ENCODE measurements at regions of chr1 and their contacts with region 1.

Region 1: GRCh38 chr1:149927503-149928387 is at the start of gene SF3B4:
- DNase-seq: peak; percentile 90 to 97 (median 95)
- ATAC-seq: peak; percentile 95 to 97
- H3K4me3 Mint-ChIP-seq: peak within 1 kb of the TSS; percentile 89 to 97 (median 92)
- H3K27ac Mint-ChIP-seq: peak within 1 kb of the TSS; percentile 96 to 99 (median 98)
- H3K4me1 Mint-ChIP-seq: peaks cover 30 to 63% (median 47%) of the 10 kb centered on the region in 4 donors
- H3K27me3 Mint-ChIP-seq: peaks cover 0 to 16% (median 5%) of the 10 kb centered on the region in 5 donors
- polyA plus RNA-seq, gene SF3B4: 55.7 to 90.4 (median 71.9) TPM

Region 2: DNA sequence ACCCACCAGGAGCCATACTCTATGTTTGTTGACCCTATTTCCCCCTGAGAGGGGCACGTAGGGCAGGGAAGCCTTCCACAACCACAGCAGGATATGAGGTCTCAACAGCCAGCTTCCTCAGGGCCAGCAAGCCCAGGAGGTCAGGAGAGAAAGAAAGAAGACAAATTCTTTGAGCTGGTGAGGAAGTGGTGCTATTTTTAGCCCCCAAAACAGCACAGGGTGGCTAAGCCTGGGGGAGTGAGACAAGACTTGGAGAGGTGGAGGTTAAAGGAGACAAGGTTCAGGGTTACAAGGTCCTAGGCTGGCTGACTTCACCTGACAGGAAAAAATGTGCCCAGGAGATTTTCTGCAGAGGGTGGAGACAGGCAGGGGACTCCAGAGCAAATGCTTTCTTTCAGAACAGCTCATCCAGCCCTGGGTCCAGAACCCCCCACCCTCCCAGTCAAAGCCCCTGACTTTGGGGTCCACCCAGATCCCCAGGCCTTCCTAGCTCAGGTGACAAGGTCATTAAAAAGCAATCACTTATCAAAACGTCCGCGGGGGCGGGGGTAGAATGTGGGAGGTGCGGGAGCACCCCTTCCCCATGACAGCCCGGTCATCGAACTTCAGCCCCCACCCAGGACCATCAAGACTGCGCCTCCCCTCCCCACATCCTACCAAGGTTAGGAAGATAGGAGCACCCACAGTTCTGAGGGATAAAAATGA is 11.4 kb before region 1 on chr1:
- POLR2A ChIA-PET with region 1: interaction called, 15 read pairs
- DNase-seq: no peak
- ATAC-seq: peak; percentile 21 to 45
- H3K4me3 Mint-ChIP-seq: peak overlapping the region; percentile 68 to 93 (median 90)
- H3K27ac Mint-ChIP-seq: peak overlapping the region; percentile 10 to 85 (median 72)
- H3K4me1 Mint-ChIP-seq: peaks cover 14 to 46% (median 42%) of the 10 kb centered on the region in 4 donors
- H3K27me3 Mint-ChIP-seq: peaks cover 0 to 4% (median 0%) of the 10 kb centered on the region in 5 donors

Region 3: DNA sequence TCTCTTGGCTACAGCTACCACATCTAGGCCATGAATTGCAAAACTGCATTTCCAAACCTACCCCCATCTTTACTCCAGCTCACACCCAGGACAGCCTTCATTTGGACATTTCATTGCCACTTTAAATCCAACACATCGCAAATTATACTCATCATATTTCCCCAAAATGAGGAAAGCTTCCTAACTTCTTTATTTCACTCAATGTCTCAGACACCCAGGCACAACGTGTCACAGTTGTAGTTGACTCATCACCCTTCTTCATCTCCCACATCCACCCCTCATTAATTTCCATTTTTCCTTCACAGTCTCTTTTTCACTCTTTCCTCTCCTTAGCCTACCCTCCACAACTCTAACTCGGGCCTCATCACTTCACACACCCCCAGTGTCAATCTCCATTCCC is 76.1 kb after region 1 on chr1:
- POLR2A ChIA-PET with region 1: no interaction called
- DNase-seq: no peak
- ATAC-seq: no peak
- H3K4me3 Mint-ChIP-seq: no peak overlapping the region
- H3K27ac Mint-ChIP-seq: peak overlapping the region in 2 of 10 donors; percentile 5 to 77
- H3K4me1 Mint-ChIP-seq: peaks cover 14 to 30% (median 16%) of the 10 kb centered on the region in 4 donors
- H3K27me3 Mint-ChIP-seq: peaks cover 0 to 28% (median 0%) of the 10 kb centered on the region in 5 donors